ENCODE measurements at regions of chr16 and their contacts with region 1.

Region 1: GRCh38 chr16:57300387-57301125 is 16.1 kb upstream of the PLLP start:
- DNase-seq: peak; percentile 100
- H3K4me3 Mint-ChIP-seq: no peak overlapping the region
- H3K27ac Mint-ChIP-seq: no peak overlapping the region
- H3K4me1 Mint-ChIP-seq: no peaks in the 10 kb centered on the region
- H3K27me3 Mint-ChIP-seq: no peaks in the 10 kb centered on the region
- CTCF ChIP-seq: peak; percentile 93

Region 2: GRCh38 chr16:57185944-57186871 is 114.3 kb before region 1 on chr16 and contains the starts of genes PSME3IP1 and RSPRY1:
- CTCF ChIA-PET with region 1: no interaction called
- POLR2A ChIA-PET with region 1: interaction called, 14 read pairs
- intact Hi-C with region 1: loop called (anchors 1 kb)
- DNase-seq: peak; percentile 99
- H3K4me3 Mint-ChIP-seq: peak within 1 kb of the TSS; percentile 95
- H3K27ac Mint-ChIP-seq: peak within 1 kb of the TSS; percentile 98
- H3K4me1 Mint-ChIP-seq: peaks cover 35% of the 10 kb centered on the region
- H3K27me3 Mint-ChIP-seq: no peaks in the 10 kb centered on the region
- CTCF ChIP-seq: no peak
- total RNA-seq, gene PSME3IP1: 100 and 107 TPM in 2 replicates
- total RNA-seq, gene RSPRY1: 55.9 and 62.0 TPM in 2 replicates

Region 3: DNA sequence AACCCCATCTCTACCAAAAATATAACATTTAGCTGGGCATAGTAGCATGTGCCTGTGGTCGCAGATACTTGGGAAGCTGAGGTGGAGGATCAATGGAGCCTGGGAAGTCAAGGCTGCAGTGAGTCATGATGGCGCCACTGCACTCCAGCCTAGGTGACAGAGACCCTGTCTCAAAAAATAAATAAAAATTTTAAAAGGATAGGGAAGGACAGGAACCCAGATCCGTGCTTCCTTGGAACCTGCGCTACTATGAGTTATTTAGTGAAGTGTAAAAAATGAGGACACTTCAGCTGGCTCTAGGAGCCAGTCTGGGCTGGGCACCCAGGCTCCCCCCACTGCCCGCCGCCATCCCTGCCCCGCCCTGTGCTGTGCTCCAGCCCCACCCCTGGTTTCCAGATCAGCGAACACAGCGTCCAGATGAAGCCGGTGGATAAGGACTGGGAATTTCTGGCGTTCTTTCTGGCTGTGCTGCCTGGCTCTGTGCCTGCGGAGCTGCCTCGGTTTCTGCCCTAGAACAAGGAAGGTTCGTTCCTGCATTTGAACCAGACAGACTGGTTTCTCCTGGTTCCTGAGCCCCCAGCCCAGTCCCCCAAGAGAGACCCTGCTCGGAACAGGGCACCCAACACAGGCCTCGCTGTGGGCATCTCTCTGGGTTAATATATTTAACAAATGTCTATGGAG is 34.6 kb before region 1 on chr16:
- CTCF ChIA-PET with region 1: interaction called, 6 read pairs
- POLR2A ChIA-PET with region 1: interaction called, 27 read pairs
- intact Hi-C with region 1: no loop called
- DNase-seq: peak; percentile 84
- H3K4me3 Mint-ChIP-seq: peak overlapping the region; percentile 69
- H3K27ac Mint-ChIP-seq: peak overlapping the region; percentile 89
- H3K4me1 Mint-ChIP-seq: peaks cover 25% of the 10 kb centered on the region
- H3K27me3 Mint-ChIP-seq: no peaks in the 10 kb centered on the region
- CTCF ChIP-seq: no peak

Region 4: GRCh38 chr16:57413301-57413730 is 112.8 kb after region 1 on chr16:
- CTCF ChIA-PET with region 1: interaction called, 211 read pairs
- POLR2A ChIA-PET with region 1: interaction called, 34 read pairs
- intact Hi-C with region 1: loop called (anchors 1 kb)
- DNase-seq: no peak
- H3K4me3 Mint-ChIP-seq: no peak overlapping the region
- H3K27ac Mint-ChIP-seq: no peak overlapping the region
- H3K4me1 Mint-ChIP-seq: peaks cover 22% of the 10 kb centered on the region
- H3K27me3 Mint-ChIP-seq: no peaks in the 10 kb centered on the region
- CTCF ChIP-seq: no peak

Region 5: GRCh38 chr16:57447186-57447962 is 146.8 kb after region 1 on chr16 and contains the starts of genes CIAPIN1 and COQ9:
- CTCF ChIA-PET with region 1: interaction called, 3 read pairs
- POLR2A ChIA-PET with region 1: interaction called, 24 read pairs
- intact Hi-C with region 1: no loop called
- DNase-seq: peak; percentile 95
- H3K4me3 Mint-ChIP-seq: peak within 1 kb of the TSS; percentile 90
- H3K27ac Mint-ChIP-seq: peak within 1 kb of the TSS; percentile 97
- H3K4me1 Mint-ChIP-seq: peaks cover 9% of the 10 kb centered on the region
- H3K27me3 Mint-ChIP-seq: no peaks in the 10 kb centered on the region
- CTCF ChIP-seq: no peak
- total RNA-seq, gene CIAPIN1: 99.9 and 105 TPM in 2 replicates
- total RNA-seq, gene COQ9: 72.5 and 80.8 TPM in 2 replicates